ENCODE measurements at regions of chr11 and their contacts with region 1.

Region 1: GRCh38 chr11:250740-251299 is 14.0 kb downstream of the PSMD13 start:
- DNase-seq: peak; percentile 60
- CTCF ChIP-seq: peak; percentile 63

Region 2: GRCh38 chr11:196786-197719 is 53.8 kb before region 1 on chr11:
- CTCF ChIA-PET with region 1: no interaction called
- POLR2A ChIA-PET with region 1: no interaction called
- DNase-seq: no peak
- CTCF ChIP-seq: no peak

Region 3: GRCh38 chr11:269146-269890 is 18.5 kb after region 1 on chr11:
- CTCF ChIA-PET with region 1: interaction called, 28 read pairs
- POLR2A ChIA-PET with region 1: no interaction called
- DNase-seq: no peak
- CTCF ChIP-seq: no peak

Region 4: GRCh38 chr11:299951-300735 is 49.3 kb after region 1 on chr11:
- CTCF ChIA-PET with region 1: interaction called, 13 read pairs
- POLR2A ChIA-PET with region 1: no interaction called
- DNase-seq: no peak
- CTCF ChIP-seq: peak; percentile 41

Region 5: DNA sequence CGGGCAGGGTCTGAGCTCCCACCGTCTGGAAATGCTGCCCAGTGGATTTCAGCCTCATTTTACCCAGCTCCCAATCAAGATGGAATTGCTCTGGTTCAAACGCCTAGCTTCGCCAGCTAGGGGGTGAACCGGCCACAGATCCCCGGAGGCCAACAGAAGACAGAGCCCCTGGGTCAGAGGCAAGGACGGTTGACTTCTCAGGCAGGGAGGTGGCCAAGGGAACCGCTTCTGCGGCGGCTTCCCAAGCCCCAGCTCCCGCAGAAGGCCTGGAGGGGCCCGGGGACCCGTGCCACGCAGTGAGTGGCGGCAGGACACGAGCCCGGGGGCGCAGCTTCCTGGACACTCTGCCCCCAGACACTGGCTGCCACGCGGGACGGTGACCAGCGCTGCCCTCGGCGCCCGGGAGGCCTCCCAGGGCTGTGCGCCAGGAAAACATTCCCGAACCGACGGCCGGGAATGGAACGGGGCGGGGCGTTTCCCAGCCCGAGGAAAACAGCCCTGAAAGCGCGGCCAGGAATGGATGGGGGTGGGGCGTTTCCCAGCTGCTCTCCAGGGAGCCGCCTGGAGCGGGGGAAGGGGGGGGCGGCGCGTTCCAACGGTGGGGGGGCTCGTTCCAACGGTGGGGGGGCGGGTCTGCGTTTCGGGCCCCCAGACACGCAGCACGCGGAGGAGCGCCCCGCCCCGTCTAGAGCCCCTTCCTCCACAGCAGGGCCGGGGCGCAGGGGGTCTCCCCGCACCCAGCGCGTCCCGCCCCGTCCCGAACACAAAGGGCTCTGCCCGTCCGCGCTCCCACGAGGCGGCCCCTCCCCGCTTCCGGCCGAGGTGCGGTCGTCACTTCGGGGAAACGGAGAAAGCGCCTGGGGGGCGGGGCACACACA is 105.0 kb after region 1 on chr11:
- CTCF ChIA-PET with region 1: interaction called, 64 read pairs
- POLR2A ChIA-PET with region 1: no interaction called
- DNase-seq: peak; percentile 89
- CTCF ChIP-seq: no peak

Region 6: DNA sequence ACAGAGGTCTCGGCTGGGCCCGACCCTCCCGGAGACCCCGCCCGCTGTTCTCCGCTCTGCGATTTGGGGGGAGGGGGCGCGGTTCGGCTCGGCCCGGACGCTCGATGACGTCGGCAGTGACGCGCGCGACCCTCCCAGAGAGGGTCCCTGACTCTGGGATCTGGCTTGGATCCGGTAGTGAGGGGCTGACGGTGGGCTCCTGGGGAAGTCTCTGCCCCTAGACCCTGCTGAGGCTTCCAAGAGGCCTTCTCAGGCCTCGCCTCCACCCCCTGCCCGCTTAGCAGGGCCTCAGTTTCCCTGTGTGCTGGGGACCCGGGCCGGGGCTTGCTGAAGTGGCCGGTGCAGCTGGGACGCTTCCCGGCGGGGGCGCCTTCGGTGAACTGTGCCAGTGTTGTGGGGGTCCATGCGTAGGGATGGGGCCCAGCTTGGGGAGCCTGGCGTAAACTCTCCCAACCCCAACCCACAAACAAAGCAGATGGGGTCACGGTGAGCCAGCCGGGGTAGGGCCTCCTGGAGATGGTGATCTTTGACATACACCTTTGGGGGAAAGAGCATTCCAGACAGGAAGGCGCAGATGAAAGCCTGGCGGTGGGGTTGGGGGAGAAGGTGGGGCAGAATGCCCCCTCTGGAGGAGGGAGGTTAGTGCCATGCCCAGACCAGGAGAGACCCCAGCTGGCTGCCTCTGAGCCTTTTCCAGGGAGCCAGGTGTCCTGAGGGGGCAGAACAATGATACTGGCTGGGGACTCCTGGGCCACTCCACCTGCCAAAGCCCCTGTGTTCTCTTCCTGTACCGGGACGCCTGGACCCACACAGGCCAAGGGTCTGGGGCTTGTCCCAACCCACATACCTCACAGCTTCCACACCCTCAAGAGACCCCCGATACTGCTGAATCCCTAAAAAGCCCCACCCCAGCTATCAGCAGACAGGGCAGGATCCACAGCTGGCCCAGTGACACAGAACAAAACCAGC is 119.6 kb after region 1 on chr11:
- CTCF ChIA-PET with region 1: interaction called, 64 read pairs
- POLR2A ChIA-PET with region 1: no interaction called
- DNase-seq: no peak
- CTCF ChIP-seq: no peak